Mammary epithelial cell (primary cell): ENCODE measurements at regions of chr1 and their contacts with region 1.

Region 1: DNA sequence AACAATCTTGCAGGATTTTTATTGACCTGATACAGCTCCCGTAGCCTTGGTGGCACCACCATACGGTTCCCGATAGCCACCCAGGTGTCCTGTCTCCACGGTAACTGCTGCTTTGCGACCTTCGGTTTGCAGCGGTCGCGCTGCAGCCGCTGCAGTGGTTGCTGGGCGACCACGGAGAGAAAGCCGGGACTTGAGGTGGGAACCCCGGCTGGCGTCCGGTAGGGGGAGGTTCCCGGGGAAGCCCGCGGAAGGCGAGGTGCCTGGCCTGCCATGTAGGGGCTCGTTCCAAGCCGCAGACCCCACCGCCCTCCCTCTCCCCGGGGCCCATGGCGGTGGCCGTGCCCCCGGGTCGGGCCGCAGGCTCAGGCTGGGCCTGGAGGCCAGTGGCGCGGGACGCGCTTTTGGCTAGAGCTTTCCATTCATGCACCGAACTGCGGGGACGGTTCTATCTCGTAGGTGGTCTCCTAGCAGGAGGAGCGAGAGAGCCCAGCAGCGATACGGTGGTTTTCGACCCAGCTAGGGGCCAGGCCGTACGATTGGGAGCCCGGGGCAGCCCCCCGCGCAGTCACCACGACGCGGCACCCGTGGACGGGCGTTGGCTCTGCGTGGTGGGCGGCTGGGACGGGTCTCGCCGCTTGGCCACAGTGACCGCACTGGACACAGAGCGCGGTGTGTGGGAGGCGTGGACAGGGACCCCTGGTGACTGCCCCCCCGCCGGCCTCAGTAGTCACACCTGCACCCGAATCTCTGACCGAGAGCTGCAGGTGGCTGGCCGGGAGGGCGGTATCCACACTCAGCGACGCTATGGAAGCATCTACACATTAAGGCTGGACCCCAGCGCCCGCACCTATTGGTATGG is at the start of gene KLHDC9:
- DNase-seq: peak; percentile 67
- H3K4me3 ChIP-seq: peak within 1 kb of the TSS; percentile 33 to 66 (median 52)
- H3K27ac ChIP-seq: peak within 1 kb of the TSS; percentile 31
- H3K4me1 ChIP-seq: peaks cover 30% of the 10 kb centered on the region
- H3K27me3 ChIP-seq: no peaks in the 10 kb centered on the region
- CTCF ChIP-seq: no peak
- total RNA-seq, gene KLHDC9: 3.0 to 3.8 TPM

Region 2: GRCh38 chr1:160726498-160727315 is 371.7 kb before region 1 on chr1:
- CTCF ChIA-PET with region 1: no interaction called
- dilution Hi-C with region 1: no loop called
- in situ Hi-C with region 1: no loop called
- intact Hi-C with region 1: loop called (anchors 2 kb)
- DNase-seq: peak; percentile 72
- H3K4me3 ChIP-seq: no peak overlapping the region
- H3K27ac ChIP-seq: peak overlapping the region; percentile 54
- H3K4me1 ChIP-seq: peaks cover 39% of the 10 kb centered on the region
- H3K27me3 ChIP-seq: no peaks in the 10 kb centered on the region
- CTCF ChIP-seq: peak; percentile 83 to 87

Region 3: GRCh38 chr1:160813215-160813614 is 285.2 kb before region 1 on chr1:
- CTCF ChIA-PET with region 1: no interaction called
- dilution Hi-C with region 1: no loop called
- in situ Hi-C with region 1: no loop called
- intact Hi-C with region 1: no loop called
- DNase-seq: peak; percentile 92
- H3K4me3 ChIP-seq: no peak overlapping the region
- H3K27ac ChIP-seq: no peak overlapping the region
- H3K4me1 ChIP-seq: peaks cover 10% of the 10 kb centered on the region
- H3K27me3 ChIP-seq: no peaks in the 10 kb centered on the region
- CTCF ChIP-seq: no peak

Region 4: DNA sequence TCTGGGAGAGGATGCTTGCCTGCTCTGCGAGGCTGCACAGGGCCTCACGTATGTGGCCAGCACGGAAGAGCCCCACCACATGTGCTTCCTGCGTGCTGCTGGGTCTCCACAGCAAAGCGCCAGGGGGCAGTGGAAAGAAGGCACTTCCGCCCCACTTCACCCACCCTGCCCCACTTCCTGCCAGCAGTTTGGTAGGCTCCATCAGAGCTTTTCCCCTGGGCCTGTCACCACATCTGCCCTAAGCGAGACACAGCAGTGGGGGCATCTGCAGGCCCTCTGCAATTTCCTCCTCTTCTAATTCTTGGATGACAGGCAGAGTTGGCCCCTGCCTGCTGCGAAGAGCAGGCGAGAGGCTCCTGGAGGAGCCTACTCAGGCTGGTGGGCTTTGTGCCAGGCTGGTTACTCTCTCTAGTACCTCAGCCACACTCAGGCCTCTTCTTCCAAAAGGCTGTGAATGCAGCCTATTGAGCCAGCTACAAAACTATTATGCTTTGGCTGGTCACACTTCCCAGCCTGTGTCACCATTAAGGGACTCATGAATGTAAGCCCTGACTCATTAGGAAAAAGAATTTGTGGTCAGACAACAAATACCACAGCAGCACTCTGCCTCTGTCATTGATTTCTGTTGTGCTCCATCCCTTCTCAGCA is 260.8 kb before region 1 on chr1:
- CTCF ChIA-PET with region 1: interaction called, 4 read pairs
- dilution Hi-C with region 1: loop called (anchors 25 kb)
- in situ Hi-C with region 1: loop called in 1 of 2 experiments (anchors 25 kb)
- intact Hi-C with region 1: loop called (anchors 1 kb)
- DNase-seq: peak; percentile 21
- H3K4me3 ChIP-seq: no peak overlapping the region
- H3K27ac ChIP-seq: no peak overlapping the region
- H3K4me1 ChIP-seq: no peaks in the 10 kb centered on the region
- H3K27me3 ChIP-seq: no peaks in the 10 kb centered on the region
- CTCF ChIP-seq: no peak

Region 5: GRCh38 chr1:160997323-160998038 is 101.0 kb before region 1 on chr1:
- CTCF ChIA-PET with region 1: interaction called, 8 read pairs
- dilution Hi-C with region 1: loop called (anchors 5 kb)
- in situ Hi-C with region 1: no loop called
- intact Hi-C with region 1: loop called (anchors 1 kb)
- DNase-seq: peak; percentile 64
- H3K4me3 ChIP-seq: no peak overlapping the region
- H3K27ac ChIP-seq: peak overlapping the region; percentile 9
- H3K4me1 ChIP-seq: peaks cover 32% of the 10 kb centered on the region
- H3K27me3 ChIP-seq: no peaks in the 10 kb centered on the region
- CTCF ChIP-seq: peak; percentile 59 to 71

Region 6: DNA sequence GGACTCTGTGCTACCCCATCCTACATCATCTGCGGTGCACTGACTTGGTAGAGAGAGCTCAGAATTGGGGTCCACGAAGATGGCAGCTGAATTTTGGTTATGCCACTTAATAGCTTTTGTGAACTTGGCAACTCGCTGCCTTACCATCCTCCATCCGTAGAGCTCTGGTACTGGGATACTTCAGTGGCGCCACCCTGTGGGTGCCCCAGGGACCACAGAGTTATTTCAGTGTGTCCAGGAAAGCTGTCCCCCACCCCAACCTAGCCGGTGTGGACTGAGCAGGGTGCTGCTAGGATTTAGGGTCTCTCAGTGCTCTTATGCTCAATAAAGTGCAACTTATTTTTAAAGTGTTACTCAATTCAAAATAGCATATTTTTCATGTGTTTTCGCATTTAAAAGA is 43.6 kb before region 1 on chr1:
- CTCF ChIA-PET with region 1: no interaction called
- dilution Hi-C with region 1: no loop called
- in situ Hi-C with region 1: no loop called
- intact Hi-C with region 1: no loop called
- DNase-seq: no peak
- H3K4me3 ChIP-seq: no peak overlapping the region
- H3K27ac ChIP-seq: no peak overlapping the region
- H3K4me1 ChIP-seq: no peaks in the 10 kb centered on the region
- H3K27me3 ChIP-seq: no peaks in the 10 kb centered on the region
- CTCF ChIP-seq: peak in 1 of 2 donors; percentile 7

Region 7: DNA sequence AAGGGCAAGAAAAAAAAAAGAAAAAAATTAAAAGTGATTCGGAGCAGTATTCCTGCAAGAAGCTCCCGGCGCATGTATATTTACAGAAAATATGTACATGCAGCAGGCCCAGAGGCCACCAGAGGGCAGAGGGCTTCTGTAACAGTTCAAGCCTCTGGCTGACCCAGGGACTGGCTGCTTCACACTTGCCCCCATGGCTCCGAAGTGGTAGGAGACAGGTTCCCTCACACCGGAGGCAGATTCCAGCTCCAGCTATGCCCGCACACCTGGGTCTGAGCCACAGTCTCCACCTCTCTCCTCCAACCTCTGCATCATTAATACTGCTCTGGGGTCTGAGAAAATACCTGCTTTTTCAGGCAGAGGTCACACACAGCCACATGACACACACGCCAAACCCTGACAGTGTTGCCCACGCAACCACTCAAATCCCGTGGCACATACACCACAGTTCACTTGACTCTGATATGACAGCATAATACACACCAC is 26.5 kb before region 1 on chr1:
- CTCF ChIA-PET with region 1: interaction called, 13 read pairs
- dilution Hi-C with region 1: no loop called
- in situ Hi-C with region 1: loop called in 1 of 2 experiments (anchors 5 kb)
- intact Hi-C with region 1: loop called (anchors 1 kb)
- DNase-seq: no peak
- H3K4me3 ChIP-seq: no peak overlapping the region
- H3K27ac ChIP-seq: no peak overlapping the region
- H3K4me1 ChIP-seq: peaks cover 45% of the 10 kb centered on the region
- H3K27me3 ChIP-seq: no peaks in the 10 kb centered on the region
- CTCF ChIP-seq: peak; percentile 64 to 71

Region 8: GRCh38 chr1:161238039-161238473 is 139.6 kb after region 1 on chr1 and contains the start of gene NR1I3:
- CTCF ChIA-PET with region 1: no interaction called
- dilution Hi-C with region 1: no loop called
- in situ Hi-C with region 1: no loop called
- intact Hi-C with region 1: no loop called
- DNase-seq: peak; percentile 48
- H3K4me3 ChIP-seq: no peak within 1 kb of the TSS
- H3K27ac ChIP-seq: no peak within 1 kb of the TSS
- H3K4me1 ChIP-seq: no peaks in the 10 kb centered on the region
- H3K27me3 ChIP-seq: no peaks in the 10 kb centered on the region
- CTCF ChIP-seq: no peak
- total RNA-seq, gene NR1I3: not detected